ENCODE measurements at regions of chrX and their contacts with region 1.

Region 1: GRCh38 chrX:100615005-100615404 is 21.6 kb downstream of the TSPAN6 start:
- DNase-seq: peak; percentile 38 to 55
- H3K4me3 ChIP-seq: no peak overlapping the region
- H3K4me3 Mint-ChIP-seq: no peak overlapping the region
- H3K27ac Mint-ChIP-seq: peak overlapping the region; percentile 64
- H3K4me1 ChIP-seq: 0 out of 2 replicates have a peak, but pooled peaks cover 7% of the 10 kb centered on the region
- H3K4me1 Mint-ChIP-seq: no peaks in the 10 kb centered on the region
- H3K27me3 ChIP-seq: no peaks in the 10 kb centered on the region
- H3K27me3 Mint-ChIP-seq: no peaks in the 10 kb centered on the region
- CTCF ChIP-seq: peak; percentile 22 to 59

Region 2: GRCh38 chrX:100649550-100650356 is 34.7 kb after region 1 on chrX:
- CTCF ChIA-PET with region 1: interaction called, 17 read pairs
- POLR2A ChIA-PET with region 1: interaction called, 4 read pairs
- intact Hi-C with region 1: loop called (anchors 1 kb)
- DNase-seq: peak; percentile 88 to 92
- H3K4me3 ChIP-seq: no peak overlapping the region
- H3K4me3 Mint-ChIP-seq: peak overlapping the region; percentile 71
- H3K27ac Mint-ChIP-seq: peak overlapping the region; percentile 97
- H3K4me1 ChIP-seq: peaks cover 47% of the 10 kb centered on the region
- H3K4me1 Mint-ChIP-seq: peaks cover 26% of the 10 kb centered on the region
- H3K27me3 ChIP-seq: no peaks in the 10 kb centered on the region
- H3K27me3 Mint-ChIP-seq: no peaks in the 10 kb centered on the region
- CTCF ChIP-seq: no peak

Region 3: DNA sequence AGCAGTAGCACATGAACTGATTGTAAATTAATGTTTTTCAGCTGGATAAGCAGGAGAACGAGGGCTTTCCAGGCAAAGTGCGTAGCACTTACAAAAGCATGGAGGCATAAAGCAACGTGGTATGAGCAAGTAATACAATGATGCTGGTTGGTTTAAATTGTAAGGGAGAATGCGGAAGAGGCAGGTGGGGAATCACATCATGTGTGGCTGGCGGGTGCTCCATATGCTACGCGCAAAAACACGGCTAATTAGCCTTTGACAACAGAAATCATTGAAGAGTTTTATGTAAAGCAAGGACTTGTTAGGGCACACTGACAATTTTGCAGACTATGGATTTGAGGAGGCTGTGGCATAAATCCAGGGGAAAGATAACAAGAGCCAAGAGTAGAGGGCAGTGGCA is 102.4 kb after region 1 on chrX:
- CTCF ChIA-PET with region 1: no interaction called
- POLR2A ChIA-PET with region 1: no interaction called
- intact Hi-C with region 1: no loop called
- DNase-seq: no peak
- H3K4me3 ChIP-seq: no peak overlapping the region
- H3K4me3 Mint-ChIP-seq: no peak overlapping the region
- H3K27ac Mint-ChIP-seq: no peak overlapping the region
- H3K4me1 ChIP-seq: no peaks in the 10 kb centered on the region
- H3K4me1 Mint-ChIP-seq: no peaks in the 10 kb centered on the region
- H3K27me3 ChIP-seq: no peaks in the 10 kb centered on the region
- H3K27me3 Mint-ChIP-seq: no peaks in the 10 kb centered on the region
- CTCF ChIP-seq: no peak